ENCODE measurements at regions of chr10 and their contacts with region 1.

Region 1: GRCh38 chr10:97520978-97521761 is 22.4 kb downstream of the UBTD1 start:
- DNase-seq: no peak
- CTCF ChIP-seq: peak; percentile 18

Region 2: DNA sequence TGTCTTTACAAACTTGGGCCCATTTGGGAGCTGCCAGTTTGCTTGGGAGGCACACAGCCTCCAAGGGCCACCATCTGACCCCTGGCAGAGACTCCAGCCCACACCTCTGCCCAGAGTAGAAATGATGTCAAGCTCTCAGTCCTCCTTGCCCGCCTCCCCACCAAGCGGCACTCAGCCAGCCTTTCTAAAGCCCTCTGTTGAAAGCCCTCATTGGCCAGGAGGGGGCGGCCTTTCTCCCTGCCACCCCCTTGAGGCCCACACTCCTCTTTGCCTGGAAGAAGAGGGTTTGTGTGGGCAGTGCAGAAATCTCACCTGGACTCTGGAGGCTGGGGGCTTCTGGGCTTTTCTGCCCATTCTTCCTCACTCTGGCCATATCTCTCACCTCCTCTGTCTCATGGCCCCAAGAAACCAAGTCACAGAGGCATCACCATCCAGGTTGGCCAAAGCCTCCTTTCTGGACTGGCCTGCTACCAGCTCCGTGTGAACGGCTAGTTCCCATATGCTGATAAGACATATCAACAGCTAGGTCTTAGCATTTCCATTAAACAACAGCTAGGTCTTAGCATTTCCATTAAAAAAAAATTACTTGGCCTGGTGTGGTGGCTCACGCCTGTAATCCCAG is 13.7 kb after region 1 on chr10:
- CTCF ChIA-PET with region 1: interaction called, 25 read pairs
- POLR2A ChIA-PET with region 1: no interaction called
- DNase-seq: peak; percentile 77
- CTCF ChIP-seq: peak; percentile 70

Region 3: DNA sequence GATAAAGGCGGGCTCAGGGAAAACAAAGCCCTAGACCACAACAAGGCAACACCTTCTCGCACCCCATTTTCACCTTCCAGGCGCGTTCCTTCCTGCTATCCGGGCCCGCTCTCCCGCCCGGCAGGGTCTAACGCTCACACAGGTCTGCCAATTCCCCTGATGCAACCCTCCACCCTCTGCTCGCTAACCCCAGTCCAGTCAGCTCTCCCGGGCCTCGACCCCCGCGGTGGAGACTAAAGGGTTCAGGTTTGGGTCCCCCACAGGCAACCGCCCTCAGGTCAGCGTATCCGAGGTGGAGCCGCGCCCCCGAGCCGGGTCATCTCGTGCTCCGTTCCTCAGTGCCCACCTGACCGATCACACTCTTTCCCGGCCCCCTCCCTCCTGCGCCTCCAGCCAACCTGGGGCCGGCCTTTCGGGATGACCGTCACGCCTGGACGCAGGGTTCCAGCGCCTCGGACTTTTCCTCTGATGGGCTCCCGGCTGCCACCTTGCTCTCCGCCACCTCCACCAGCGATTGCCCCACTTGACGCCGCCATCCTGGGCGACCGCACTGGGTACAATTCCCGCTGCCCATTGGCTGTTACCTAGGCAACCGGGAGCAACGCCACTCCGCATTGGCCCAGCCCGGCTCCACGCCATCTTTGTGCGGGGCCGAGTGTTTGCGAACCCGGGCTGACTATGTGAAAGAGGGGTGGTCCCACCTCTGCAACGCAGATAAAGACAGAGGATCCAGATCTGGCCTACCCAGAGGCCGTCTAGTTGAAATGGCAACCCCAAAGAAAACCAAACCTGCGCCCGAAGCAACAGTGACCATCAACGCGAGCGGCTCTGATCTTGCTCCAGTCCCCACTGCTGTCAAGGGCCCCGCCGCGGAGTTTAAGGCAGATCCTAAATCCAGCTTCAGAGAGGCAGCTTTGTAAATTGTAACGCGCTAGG is 112.0 kb after region 1 on chr10 and contains the start of gene MORN4:
- CTCF ChIA-PET with region 1: no interaction called
- POLR2A ChIA-PET with region 1: no interaction called
- DNase-seq: peak; percentile 91
- CTCF ChIP-seq: no peak